Activated naive CD4-positive, alpha-beta T cell treated with anti-CD3 and anti-CD28 coated beads for 36 hours (primary cell): ENCODE measurements at regions of chr4 and their contacts with region 1.

Region 1: GRCh38 chr4:114386637-114387233 is 211.9 kb upstream of the UGT8 start:
- DNase-seq: peak; percentile 7
- H3K4me3 Mint-ChIP-seq: no peak overlapping the region
- H3K27ac Mint-ChIP-seq: no peak overlapping the region
- H3K4me1 Mint-ChIP-seq: no peaks in the 10 kb centered on the region
- H3K27me3 Mint-ChIP-seq: peaks cover 4% of the 10 kb centered on the region

Region 2: DNA sequence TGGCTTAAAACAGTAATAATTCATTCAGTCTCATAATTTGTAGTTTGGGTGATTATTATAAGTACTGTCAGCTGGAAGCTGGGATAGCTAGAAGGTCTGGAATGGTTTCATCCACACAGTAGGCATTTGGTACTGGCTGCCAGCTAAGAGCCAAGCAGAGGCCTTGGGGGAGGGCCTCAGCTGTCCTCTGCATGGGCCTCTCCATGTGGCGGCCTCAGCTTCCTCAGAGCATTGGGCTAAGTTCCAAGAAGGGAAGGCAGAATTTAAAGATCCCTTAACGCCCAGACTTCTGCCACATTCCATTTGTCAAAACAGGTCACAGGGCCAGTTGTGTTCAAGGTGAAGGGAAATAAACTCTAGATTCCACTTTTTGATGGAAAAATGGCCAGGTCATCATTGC is 1964.1 kb before region 1 on chr4:
- CTCF ChIA-PET with region 1: no interaction called
- intact Hi-C with region 1: no loop called
- DNase-seq: no peak
- H3K4me3 Mint-ChIP-seq: no peak overlapping the region
- H3K27ac Mint-ChIP-seq: no peak overlapping the region
- H3K4me1 Mint-ChIP-seq: no peaks in the 10 kb centered on the region
- H3K27me3 Mint-ChIP-seq: no peaks in the 10 kb centered on the region

Region 3: GRCh38 chr4:113278324-113278934 is 1108.3 kb before region 1 on chr4:
- CTCF ChIA-PET with region 1: no interaction called
- intact Hi-C with region 1: loop called (anchors 2 kb)
- DNase-seq: peak; percentile 88
- H3K4me3 Mint-ChIP-seq: no peak overlapping the region
- H3K27ac Mint-ChIP-seq: no peak overlapping the region
- H3K4me1 Mint-ChIP-seq: no peaks in the 10 kb centered on the region
- H3K27me3 Mint-ChIP-seq: peaks cover 15% of the 10 kb centered on the region

Region 4: DNA sequence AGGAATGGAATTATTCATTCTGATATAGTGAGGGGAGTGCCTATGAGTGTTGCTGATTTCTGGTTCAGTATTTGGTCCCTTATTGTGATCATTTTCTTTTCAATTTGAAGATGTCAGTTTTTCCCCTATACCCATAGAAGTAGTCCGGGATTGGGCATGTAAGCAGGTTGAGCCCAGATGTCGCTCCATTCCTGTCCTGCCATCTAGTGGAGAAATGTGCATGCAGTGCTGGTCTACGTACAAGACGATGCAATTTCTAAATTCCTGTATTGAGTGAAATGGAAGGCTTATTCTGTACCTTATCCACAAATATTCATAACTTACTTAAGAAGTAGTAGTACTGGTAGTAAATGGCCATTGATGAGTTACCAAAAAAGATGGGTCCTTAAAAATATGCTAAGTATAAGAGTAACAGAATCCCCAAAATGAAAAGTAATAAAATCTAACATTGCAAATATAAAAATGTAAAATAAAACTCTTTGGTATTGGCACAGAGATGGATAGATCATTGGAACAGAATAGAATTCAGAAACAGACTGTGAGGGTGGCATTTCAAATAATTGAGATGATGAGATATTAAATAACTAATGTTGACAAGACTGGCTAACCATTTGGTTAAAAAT is 272.8 kb after region 1 on chr4:
- CTCF ChIA-PET with region 1: interaction called, 8 read pairs
- intact Hi-C with region 1: loop called (anchors 1 kb)
- DNase-seq: peak; percentile 63
- H3K4me3 Mint-ChIP-seq: no peak overlapping the region
- H3K27ac Mint-ChIP-seq: no peak overlapping the region
- H3K4me1 Mint-ChIP-seq: no peaks in the 10 kb centered on the region
- H3K27me3 Mint-ChIP-seq: peaks cover 17% of the 10 kb centered on the region

Region 5: GRCh38 chr4:114694770-114695169 is 308.0 kb after region 1 on chr4:
- CTCF ChIA-PET with region 1: interaction called, 6 read pairs
- intact Hi-C with region 1: loop called (anchors 1 kb)
- DNase-seq: no peak
- H3K4me3 Mint-ChIP-seq: no peak overlapping the region
- H3K27ac Mint-ChIP-seq: no peak overlapping the region
- H3K4me1 Mint-ChIP-seq: no peaks in the 10 kb centered on the region
- H3K27me3 Mint-ChIP-seq: peaks cover 5% of the 10 kb centered on the region

Region 6: DNA sequence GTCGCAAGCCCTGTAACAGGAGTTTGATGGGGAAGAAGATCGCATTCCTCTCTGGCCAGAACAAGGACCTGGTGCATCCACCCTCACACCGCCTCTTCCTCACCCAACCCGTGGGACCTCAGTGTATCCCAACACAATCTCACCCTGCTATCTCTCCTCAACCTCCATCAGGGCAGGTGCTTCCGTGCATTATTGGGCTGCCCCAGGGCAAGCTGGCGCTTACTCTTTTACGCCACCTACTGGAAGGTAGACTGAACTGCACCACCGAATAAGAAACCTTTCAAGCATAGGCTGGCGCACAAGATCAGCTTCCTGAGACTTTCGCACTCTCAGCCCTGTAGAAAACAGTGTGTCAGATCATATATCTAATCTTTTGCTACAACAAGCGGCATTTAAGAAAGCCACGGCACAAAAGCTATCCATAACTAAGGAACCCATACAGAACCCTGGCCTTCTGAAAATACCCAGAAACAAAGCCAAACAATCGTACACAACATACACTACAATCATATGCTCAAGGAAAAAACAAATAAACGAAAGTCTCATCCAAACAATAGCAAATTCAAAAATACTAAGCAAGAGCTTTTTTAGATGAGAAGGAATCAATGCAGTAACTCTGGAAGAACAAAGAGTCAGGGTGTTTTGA is 421.1 kb after region 1 on chr4:
- CTCF ChIA-PET with region 1: no interaction called
- intact Hi-C with region 1: loop called (anchors 5 kb)
- DNase-seq: peak; percentile 42
- H3K4me3 Mint-ChIP-seq: no peak overlapping the region
- H3K27ac Mint-ChIP-seq: no peak overlapping the region
- H3K4me1 Mint-ChIP-seq: no peaks in the 10 kb centered on the region
- H3K27me3 Mint-ChIP-seq: no peaks in the 10 kb centered on the region